ENCODE measurements at regions of chr5 and their contacts with region 1.

Region 1: DNA sequence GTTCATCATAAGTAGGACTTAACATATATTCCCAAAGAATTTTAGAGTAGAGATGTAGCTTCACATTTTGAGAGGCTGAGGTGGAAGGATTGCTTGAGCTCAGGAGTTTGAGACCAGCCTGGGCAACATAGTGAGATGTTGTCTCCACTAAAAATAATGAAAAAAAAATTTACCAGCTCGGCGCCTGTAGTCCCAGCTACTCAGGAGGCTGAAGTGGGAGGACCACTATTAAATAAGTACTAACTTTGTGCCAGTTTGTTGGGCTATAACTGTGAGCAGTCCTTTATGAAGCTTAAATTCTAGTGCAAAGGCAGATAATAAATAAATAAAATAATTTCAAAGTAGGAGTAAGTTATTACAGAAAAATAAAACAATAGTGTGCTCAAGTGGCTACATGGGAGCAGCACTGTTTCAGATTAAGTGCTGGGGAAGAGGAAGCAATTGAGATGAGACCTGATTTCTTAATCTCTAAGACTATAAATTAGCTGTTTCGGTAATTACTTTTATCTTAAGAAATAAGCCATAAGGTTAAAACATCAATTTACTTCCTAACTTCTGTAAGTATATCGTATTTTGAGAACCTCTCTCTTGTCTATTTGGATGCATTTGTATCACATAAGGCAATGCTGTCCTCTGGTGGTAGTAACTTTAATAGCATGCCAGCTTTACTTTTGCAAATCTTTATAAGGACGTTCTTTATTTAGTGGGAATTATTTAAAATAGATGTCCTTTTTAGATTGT is 98.9 kb downstream of the CSNK1G3 start:
- DNase-seq: peak; percentile 36
- H3K4me3 ChIP-seq: no peak overlapping the region
- H3K27ac ChIP-seq: no peak overlapping the region
- H3K27me3 ChIP-seq: no peaks in the 10 kb centered on the region
- CTCF ChIP-seq: peak; percentile 99

Region 2: DNA sequence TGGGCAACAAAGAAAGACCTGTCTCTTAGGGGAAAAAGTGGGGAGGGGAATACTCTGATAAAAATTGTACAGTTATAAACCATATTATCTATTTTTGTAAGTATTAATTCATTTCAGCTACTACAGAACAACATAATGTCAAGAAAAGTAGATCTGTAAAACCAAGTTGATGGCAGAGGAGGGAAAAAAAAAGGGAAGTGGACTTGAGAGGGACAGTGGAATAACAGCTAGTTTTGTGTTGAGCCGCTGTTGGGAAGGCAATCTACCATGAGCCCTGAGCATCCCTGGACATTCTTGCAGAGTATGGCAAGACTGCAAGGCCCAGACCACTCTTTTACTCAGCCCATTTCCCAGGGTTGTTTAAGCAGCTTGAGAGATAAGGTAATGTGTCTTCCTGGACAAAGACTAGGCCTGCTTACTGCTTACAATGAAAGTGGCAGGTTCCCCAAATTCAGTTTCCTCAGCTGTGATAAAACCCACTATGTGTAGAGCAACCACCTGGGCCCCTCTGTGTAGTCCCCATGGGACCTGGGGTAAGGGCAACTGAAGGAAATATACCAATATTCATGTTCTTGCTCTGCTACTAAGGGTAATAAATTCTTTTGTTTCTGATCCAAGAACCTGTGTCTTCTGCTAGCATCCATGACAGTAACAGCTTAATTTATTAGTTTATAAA is 212.6 kb before region 1 on chr5:
- CTCF ChIA-PET with region 1: interaction called, 12 read pairs
- POLR2A ChIA-PET with region 1: no interaction called
- DNase-seq: no peak
- H3K4me3 ChIP-seq: no peak overlapping the region
- H3K27ac ChIP-seq: no peak overlapping the region
- H3K27me3 ChIP-seq: no peaks in the 10 kb centered on the region
- CTCF ChIP-seq: no peak